ENCODE measurements at regions of chr6 and their contacts with region 1.

Region 1: DNA sequence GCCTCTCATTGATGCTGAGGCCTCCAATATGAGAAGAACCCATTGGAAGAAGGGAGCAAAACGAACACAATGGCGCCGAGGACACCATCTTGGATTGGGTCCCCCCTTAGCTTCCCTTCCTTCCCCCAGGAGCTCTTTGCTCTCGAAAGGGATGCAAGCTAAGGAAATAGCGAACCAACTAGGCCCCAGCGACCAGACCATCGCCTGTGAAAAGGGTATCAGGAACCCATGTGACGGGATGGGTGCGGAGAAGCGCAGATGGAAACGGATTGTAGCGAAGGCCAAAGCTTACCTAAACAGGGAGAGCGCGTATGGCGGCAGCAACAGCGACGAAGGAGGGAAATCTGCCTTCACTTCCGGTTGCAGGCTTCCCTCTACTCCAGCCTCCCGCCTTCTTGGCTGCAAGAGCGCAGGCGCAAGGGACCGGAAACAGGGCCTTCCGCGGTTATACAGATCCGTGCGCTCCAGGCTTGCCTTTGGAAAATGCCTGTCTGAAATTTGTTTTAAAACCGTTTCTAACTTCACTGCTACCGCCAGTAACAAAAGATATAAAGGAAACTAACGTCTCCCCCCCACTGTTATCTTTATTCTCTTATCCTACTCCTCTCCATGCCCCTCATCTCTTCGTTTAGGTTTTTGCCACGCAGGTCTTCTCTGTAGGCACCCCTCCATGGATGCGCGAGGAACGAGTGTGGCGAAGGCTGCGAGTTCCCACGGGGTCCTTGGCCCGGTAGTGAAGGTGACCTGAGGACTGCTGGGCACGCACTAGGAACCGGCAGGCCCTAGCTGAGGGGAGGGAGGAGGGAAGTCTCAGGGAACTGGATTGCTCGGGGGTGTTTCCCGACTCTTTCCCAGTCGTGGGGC is at the start of gene DDX39B:
- H3K4me3 ChIP-seq: peak within 1 kb of the TSS; percentile 64
- H3K27ac ChIP-seq: peak within 1 kb of the TSS; percentile 100
- H3K4me1 ChIP-seq: peaks cover 14% of the 10 kb centered on the region
- CTCF ChIP-seq: no peak

Region 2: DNA sequence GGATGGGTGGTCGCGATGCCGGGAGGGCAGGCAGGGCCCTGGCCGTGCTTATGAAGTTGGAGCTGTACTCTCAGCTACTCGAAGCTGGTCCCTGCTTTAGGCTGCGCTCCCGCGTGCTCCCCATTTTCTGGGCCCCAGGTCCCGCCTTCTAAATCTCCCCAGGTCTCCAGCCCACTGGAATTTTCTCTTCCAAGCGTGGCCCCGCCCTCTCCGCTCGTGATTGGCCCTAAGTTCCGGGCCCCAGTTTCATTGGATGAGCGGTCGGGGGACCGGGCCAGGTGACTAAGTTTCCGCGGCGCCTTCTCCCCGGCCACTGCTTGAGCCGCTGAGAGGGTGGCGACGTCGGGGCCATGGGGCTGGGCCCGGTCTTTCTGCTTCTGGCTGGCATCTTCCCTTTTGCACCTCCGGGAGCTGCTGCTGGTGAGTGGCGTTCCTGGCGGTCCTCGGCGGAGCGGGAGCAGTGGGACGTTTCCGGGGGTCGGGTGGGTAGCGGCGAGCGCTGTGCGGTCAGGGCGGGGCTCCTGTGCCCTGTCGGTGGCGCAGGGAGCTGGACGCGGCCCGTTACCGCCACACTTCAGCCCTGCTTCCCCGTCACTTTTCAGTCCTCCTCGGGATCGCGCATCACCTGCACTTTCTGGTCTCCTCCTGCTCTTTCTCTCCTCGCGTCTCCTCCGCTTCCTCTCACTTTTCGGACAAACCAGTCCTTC is 138.5 kb before region 1 on chr6 and contains the start of gene MICA:
- CTCF ChIA-PET with region 1: no interaction called
- POLR2A ChIA-PET with region 1: interaction called, 10 read pairs
- H3K4me3 ChIP-seq: peak within 1 kb of the TSS; percentile 84
- H3K27ac ChIP-seq: peak within 1 kb of the TSS; percentile 63; the same call in 1 of the 2 replicates
- H3K4me1 ChIP-seq: peaks cover 5% of the 10 kb centered on the region; the same call in 1 of the 2 replicates
- CTCF ChIP-seq: peak; percentile 84

Region 3: DNA sequence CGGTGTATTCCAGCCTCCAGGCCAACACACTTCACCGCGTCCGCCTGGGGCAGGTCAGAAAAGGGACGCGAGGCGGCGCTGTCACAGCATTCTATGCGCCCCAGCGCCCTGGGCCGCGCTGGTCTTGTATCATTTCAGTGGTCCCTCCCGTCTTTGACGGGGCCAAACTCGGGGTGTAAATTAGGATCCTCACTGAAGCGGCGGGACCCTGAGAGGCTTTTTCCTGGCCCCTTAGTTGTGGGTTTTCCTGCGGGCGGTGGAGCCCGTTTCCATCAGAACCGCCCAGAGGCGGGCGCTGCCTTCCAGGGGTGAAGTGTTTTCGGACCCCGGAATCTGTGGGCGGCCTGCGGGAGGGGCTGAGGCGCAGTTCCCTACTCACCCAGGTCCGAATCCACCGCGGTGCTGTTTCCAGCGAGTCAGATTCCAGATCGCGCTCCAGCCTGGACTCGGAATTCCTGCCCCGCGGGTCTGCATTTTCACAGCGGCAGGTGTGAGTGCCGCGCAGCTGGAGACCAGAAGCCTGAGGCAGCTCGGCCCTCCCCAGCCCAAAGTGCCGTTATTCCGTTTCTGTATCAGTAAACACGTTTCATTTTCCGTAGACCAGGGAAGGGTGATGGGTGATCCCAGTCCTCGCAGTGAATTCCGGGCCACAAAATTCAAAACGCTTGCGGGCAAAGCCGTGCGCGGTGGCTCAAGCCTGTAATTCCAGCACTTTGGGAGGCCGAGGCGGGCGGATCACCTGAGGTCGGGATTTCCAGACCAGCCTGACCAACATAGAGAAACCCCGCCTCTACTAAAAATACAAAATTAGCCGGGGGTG is 47.8 kb before region 1 on chr6:
- CTCF ChIA-PET with region 1: interaction called, 40 read pairs
- POLR2A ChIA-PET with region 1: interaction called, 97 read pairs
- H3K4me3 ChIP-seq: peak overlapping the region; percentile 60
- H3K27ac ChIP-seq: peak overlapping the region; percentile 64
- H3K4me1 ChIP-seq: no peaks in the 10 kb centered on the region
- CTCF ChIP-seq: peak; percentile 98

Region 4: DNA sequence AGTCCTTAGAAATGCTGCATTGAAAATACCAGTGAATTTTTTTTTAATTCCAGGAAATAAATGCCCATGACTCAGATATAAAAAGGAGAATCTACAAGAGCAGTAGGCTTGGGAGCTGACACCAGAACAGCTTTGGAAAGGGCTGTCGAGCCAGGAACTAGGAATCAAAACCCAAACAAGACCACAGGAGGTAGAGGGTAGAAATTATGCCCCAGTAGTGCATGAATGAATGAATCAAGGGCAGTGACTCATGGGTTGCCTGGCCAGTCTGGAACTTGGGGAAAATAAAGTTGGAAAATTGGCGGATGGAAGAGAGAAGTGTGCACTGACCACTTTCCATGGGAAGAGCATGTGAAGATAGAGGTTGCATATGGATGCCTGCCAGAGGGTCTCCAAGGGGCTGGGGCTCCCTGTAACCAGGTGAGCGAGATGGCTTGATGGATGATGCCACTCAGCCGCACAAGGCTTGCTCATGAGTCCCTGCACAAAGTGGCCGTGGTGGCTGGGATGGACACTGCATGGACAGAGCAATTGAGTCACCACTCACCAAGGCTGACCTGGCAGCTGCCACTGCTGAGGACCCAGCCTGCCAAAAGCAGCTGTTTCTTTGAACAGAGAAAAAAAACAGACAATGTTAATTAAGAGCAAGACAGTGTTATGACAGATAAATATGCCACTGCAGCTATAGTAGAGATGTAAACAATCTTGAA is 28.3 kb before region 1 on chr6:
- CTCF ChIA-PET with region 1: interaction called, 6 read pairs
- POLR2A ChIA-PET with region 1: interaction called, 11 read pairs
- H3K4me3 ChIP-seq: no peak overlapping the region
- H3K27ac ChIP-seq: no peak overlapping the region
- H3K4me1 ChIP-seq: no peaks in the 10 kb centered on the region
- CTCF ChIP-seq: no peak

Region 5: GRCh38 chr6:31525932-31526591 is 15.8 kb before region 1 on chr6:
- CTCF ChIA-PET with region 1: interaction called, 5 read pairs
- POLR2A ChIA-PET with region 1: interaction called, 112 read pairs
- H3K4me3 ChIP-seq: no peak overlapping the region
- H3K27ac ChIP-seq: no peak overlapping the region
- H3K4me1 ChIP-seq: peaks cover 3% of the 10 kb centered on the region
- CTCF ChIP-seq: no peak

Region 6: GRCh38 chr6:31580807-31581433 is 39.0 kb after region 1 on chr6:
- CTCF ChIA-PET with region 1: interaction called, 65 read pairs
- POLR2A ChIA-PET with region 1: interaction called, 7 read pairs
- H3K4me3 ChIP-seq: peak overlapping the region; percentile 44
- H3K27ac ChIP-seq: peak overlapping the region; percentile 34; the same call in 1 of the 2 replicates
- H3K4me1 ChIP-seq: peaks cover 4% of the 10 kb centered on the region; the same call in 1 of the 2 replicates
- CTCF ChIP-seq: peak; percentile 98

Region 7: DNA sequence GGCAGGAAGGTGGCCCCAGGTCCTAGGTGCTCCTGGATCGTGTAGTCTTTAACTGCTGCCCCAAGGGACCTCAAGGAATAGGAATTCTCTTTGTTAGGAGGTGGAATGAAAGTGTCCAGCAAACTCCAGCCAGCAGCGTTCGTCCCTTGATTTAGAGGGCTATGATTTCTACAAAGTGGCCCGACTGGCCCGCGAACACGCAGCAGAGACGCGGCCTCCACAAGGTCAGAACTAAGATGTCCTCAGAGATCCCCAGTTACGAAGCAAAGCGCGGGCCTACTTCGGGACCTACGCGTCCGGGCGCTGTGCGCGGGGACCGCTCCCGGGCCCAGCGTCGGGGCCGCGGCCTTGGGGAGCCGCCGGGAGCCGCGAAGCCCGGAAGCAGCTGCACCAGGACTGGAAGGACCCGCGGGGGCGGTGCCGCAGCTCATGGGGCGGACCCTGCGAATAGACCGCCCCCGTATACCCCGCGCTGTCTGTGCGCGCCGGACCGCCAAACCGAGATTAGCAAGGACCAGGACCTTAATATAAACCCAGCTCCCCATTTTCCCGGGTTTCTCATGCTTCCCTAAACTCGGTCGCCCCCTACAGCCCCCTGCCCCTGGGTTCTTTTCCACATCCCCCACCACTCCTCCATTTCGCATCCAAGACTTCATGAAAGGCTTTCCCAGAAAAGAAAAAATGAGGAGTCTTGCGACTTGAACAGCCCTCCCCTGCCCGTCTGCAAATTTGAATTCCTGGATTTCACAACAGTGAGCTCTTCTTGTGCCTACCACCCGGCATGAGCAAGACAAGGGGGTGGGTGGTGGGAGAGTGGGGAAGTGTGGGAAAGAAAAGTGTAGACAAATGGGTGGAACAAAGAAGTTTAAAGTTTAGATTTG is 118.7 kb after region 1 on chr6 and contains the start of gene C6orf47:
- CTCF ChIA-PET with region 1: interaction called, 4 read pairs
- POLR2A ChIA-PET with region 1: interaction called, 12 read pairs
- H3K4me3 ChIP-seq: peak within 1 kb of the TSS; percentile 67
- H3K27ac ChIP-seq: peak within 1 kb of the TSS; percentile 73
- H3K4me1 ChIP-seq: peaks cover 6% of the 10 kb centered on the region; the same call in 1 of the 2 replicates
- CTCF ChIP-seq: no peak